ENCODE measurements at regions of chr14 and their contacts with region 1.

Region 1: DNA sequence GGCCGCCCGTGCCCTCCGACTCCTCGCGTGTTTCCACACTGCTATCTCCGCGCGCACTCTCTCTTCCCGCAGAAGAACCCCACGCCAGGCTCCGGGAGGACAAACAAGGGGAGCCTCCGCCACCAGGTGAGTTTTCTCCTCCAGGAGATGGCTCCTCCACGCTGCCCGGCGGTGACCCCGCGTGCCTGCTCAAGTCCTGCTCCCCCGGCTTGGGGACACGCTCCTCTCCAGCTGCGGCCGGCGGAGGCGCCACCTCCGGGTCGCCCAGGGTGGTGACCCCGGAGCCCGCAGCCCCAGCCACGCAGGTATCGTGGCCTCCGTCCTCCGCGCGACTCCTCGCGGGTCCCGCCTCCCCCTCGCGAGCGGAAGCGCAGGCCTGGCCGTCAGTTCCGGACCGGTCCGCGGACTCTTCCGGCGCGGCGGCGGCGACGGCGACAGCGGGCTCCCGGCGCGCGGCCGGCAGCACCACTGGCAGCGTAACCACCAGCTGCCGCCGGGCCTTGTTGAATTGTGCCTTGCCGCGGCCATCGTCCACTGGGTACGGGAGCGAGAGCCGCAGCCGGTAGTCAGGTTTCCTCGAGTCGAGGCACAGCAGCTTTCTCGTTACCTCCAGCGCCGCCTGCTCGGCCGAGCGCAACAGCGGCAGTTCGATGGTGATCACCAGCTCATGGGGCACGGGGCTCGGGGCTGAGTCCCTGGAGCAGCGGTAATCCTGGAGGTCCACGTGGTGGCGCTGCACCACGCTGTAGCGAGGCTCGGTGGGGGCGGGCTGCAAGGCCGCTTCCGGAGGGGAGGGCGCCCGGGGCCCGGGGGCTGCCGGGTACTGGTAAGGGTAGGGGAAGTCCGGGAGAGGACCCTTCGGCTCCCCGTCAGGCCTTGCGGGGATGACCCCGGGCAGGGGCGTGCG is 1.2 kb downstream of the DNAAF2 start:
- DNase-seq: peak; percentile 95
- H3K4me3 Mint-ChIP-seq: peak overlapping the region; percentile 97
- H3K27ac Mint-ChIP-seq: peak overlapping the region; percentile 85
- H3K4me1 Mint-ChIP-seq: peaks cover 18% of the 10 kb centered on the region
- H3K27me3 Mint-ChIP-seq: no peaks in the 10 kb centered on the region
- CTCF ChIP-seq: peak; percentile 67

Region 2: GRCh38 chr14:49160983-49161382 is 472.9 kb before region 1 on chr14:
- CTCF ChIA-PET with region 1: no interaction called
- intact Hi-C with region 1: no loop called
- DNase-seq: no peak
- H3K4me3 Mint-ChIP-seq: no peak overlapping the region
- H3K27ac Mint-ChIP-seq: no peak overlapping the region
- H3K4me1 Mint-ChIP-seq: no peaks in the 10 kb centered on the region
- H3K27me3 Mint-ChIP-seq: no peaks in the 10 kb centered on the region
- CTCF ChIP-seq: no peak

Region 3: DNA sequence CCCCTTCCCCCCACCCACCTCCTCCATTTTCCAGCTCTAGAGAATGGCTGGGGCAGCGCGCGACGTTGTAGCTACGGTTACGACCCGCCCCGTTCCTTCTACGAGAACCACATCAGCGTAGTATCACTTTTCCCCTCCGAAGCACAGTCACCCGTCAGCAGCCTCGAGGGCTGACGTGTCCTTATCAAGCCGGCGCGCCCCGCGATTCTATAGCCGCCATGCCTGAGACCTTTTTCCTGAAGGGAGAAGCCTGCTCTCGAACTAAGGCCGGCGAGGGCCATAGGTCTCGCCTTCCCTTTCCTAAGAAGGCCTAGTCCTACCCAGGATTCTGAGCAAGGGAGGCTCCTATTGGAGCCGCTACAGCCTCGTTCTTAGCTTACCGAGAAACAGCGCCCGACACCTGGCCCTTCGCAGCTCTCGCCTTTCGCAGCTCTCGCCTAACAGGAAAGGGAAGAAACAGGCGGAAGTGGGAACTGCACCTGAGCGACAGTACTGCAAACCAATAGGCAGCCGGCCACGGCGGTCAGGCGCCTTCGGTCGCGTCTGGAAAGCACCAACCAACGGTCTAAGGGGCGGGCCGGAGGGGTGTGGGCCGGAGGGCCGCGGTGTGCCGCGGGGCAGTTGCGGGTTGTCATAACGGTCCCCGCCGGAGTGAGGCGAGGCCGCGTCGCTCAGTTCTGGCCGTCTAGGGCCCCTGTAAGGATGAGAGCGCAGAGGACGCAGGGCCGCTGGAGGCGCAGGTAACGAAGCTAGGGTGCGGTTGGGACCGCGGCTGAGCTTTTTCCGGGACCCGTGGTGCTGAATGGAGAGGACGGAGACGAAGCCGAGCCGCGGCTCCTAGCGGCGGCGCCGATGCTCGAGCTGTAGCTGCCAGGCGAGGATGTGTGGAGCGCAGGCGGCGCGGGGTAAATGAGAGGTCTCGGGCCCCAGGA is 13.4 kb before region 1 on chr14 and contains the starts of genes MGAT2 and RPL36AL:
- CTCF ChIA-PET with region 1: interaction called, 12 read pairs
- intact Hi-C with region 1: no loop called
- DNase-seq: peak; percentile 99
- H3K4me3 Mint-ChIP-seq: peak within 1 kb of the TSS; percentile 95
- H3K27ac Mint-ChIP-seq: peak within 1 kb of the TSS; percentile 99
- H3K4me1 Mint-ChIP-seq: peaks cover 17% of the 10 kb centered on the region
- H3K27me3 Mint-ChIP-seq: no peaks in the 10 kb centered on the region
- CTCF ChIP-seq: no peak
- total RNA-seq, gene MGAT2: 39.3 and 45.8 TPM in 2 replicates
- total RNA-seq, gene RPL36AL: 159 and 161 TPM in 2 replicates

Region 4: DNA sequence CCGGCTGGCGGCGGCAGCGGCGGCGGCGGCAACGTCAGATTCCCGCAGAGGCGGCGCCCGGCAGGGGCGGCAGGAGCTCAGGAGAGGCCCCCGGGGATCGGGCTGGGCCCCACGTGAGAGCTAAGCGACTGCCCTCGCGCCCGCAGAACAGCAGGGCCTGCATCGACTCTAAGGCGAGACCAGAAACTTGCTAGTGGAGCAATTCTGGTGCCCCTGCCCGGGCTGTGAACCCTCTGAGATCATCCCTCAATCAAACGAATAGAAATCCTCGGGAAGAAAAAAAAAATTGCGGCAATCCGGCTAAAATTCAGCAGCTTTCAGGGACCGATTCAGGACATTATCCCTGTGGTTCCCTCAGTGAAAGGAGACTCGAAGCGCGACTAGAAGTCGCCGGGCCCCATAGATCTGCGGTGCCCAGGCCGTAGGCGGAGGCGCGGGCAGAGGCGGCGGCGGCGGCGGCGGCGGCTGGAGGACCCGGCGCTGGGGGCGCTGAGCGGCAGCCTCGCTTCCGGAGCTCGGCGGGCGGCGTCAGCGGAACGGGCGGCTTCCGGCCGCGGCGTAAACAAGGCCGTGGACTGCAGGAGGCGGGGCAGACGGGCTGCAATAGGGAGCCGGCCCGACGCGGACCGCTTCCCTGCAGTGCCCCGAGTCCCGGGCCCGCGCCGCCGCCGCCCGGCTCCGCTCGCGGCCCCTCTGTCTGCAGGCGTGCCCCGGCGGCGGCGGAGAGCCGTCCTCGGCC is 133.8 kb after region 1 on chr14 and contains the start of gene KLHDC2:
- CTCF ChIA-PET with region 1: interaction called, 27 read pairs
- intact Hi-C with region 1: loop called (anchors 5 kb)
- DNase-seq: peak; percentile 91
- H3K4me3 Mint-ChIP-seq: peak within 1 kb of the TSS; percentile 85
- H3K27ac Mint-ChIP-seq: peak within 1 kb of the TSS; percentile 78
- H3K4me1 Mint-ChIP-seq: peaks cover 28% of the 10 kb centered on the region
- H3K27me3 Mint-ChIP-seq: no peaks in the 10 kb centered on the region
- CTCF ChIP-seq: no peak
- total RNA-seq, gene KLHDC2: 26.8 and 30.7 TPM in 2 replicates

Region 5: GRCh38 chr14:49820176-49820575 is 186.3 kb after region 1 on chr14:
- CTCF ChIA-PET with region 1: no interaction called
- intact Hi-C with region 1: no loop called
- DNase-seq: no peak
- H3K4me3 Mint-ChIP-seq: no peak overlapping the region
- H3K27ac Mint-ChIP-seq: no peak overlapping the region
- H3K4me1 Mint-ChIP-seq: no peaks in the 10 kb centered on the region
- H3K27me3 Mint-ChIP-seq: no peaks in the 10 kb centered on the region
- CTCF ChIP-seq: no peak

Region 6: DNA sequence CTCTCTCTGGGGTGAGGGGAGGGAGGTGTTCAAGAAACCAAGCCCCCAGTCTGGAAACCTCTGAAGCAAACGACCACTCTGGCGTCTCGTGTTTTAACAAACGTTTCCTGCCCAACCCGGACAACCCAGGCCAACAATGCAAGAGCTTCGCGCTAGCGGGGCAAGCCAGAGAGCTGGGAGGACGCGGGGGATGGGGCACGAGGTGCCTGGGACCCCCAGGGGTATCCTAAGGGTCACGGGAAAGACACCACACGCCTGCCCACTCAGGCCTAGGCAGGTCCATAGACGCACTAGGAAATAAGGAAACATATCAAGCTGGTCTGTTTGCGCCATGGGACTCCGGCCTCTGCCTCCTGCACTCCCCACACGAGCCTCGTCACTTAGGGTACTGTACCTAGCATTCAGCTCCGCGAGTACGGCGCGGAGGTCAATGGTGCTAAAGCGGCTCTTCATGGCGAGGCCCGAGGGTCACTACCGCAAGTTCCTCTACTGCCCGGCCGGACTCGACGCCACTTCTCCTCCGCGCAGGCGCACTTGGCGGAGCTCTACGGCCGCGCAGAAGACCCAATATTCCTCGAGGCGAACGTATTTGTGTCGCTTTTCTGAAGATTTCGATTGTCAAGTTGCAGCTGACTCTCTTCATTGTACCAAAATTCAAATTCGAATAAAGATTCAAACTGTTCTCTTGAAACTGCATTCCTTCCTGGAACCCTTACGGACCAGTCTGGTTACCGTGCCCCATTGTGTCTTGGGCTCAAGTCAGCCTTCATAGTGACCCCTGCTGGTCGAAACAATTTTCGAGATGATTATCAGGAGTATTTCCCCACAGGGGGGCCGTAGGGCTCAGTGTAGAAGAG is 218.6 kb after region 1 on chr14 and contains the start of gene NEMF:
- CTCF ChIA-PET with region 1: interaction called, 12 read pairs
- intact Hi-C with region 1: no loop called
- DNase-seq: peak; percentile 86
- H3K4me3 Mint-ChIP-seq: peak within 1 kb of the TSS; percentile 96
- H3K27ac Mint-ChIP-seq: peak within 1 kb of the TSS; percentile 97
- H3K4me1 Mint-ChIP-seq: peaks cover 25% of the 10 kb centered on the region
- H3K27me3 Mint-ChIP-seq: no peaks in the 10 kb centered on the region
- CTCF ChIP-seq: peak; percentile 84
- total RNA-seq, gene NEMF: 76.3 and 77.7 TPM in 2 replicates

Region 7: GRCh38 chr14:49934646-49935045 is 300.8 kb after region 1 on chr14:
- CTCF ChIA-PET with region 1: no interaction called
- intact Hi-C with region 1: no loop called
- DNase-seq: no peak
- H3K4me3 Mint-ChIP-seq: no peak overlapping the region
- H3K27ac Mint-ChIP-seq: no peak overlapping the region
- H3K4me1 Mint-ChIP-seq: peaks cover 9% of the 10 kb centered on the region
- H3K27me3 Mint-ChIP-seq: no peaks in the 10 kb centered on the region
- CTCF ChIP-seq: no peak

Measured in Calu3 (cell line).